Activated CD4-positive, alpha-beta T cell treated with anti-CD3 and anti-CD28 coated beads, Interleukin-2, amount 10 ng/mL, durations not matched to agents 24 days and 14 days (primary cell): ENCODE measurements at regions of chr15 and their contacts with region 1.

Region 1: DNA sequence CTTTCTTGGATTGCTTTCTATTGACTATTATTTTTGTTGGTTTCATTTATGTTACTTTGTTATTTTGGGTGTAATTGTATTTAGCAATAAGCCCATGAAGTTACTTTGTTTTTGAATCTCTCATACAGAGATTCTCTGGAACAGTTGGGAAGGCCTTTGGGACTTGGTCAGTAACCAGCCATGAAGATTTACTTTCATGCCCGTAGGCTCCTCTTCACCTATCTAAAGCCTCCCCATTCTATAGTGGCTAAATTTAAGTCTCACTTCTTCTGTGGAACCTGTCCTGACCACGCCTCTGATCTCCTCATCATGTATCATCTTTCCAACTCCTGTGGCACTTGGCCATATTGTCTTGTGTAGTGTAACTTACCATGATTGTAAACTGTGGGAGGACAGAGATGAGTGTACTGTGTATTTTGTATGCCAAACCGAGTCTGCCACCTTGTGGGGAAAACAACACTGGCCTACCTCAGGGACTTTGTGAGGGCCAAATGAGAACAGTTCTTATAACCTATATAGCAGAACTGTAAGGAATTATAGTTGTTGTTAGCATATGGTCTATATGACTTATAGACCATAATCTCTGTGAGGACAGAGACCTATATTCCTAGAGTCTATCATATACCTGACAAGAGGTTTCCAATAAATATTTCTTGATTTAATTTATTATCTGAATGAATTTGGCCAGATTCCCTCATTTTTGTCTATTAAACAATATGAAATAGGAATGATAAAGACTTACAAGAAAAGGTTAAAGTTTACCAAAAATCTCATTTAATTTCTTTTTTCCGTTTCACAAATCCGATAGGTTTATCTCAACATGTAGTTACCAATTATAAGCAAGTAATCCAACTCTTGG is 75.0 kb downstream of the STARD9 start:
- DNase-seq: peak; percentile 92
- H3K4me3 Mint-ChIP-seq: no peak overlapping the region
- H3K27ac Mint-ChIP-seq: peak overlapping the region; percentile 0
- H3K4me1 Mint-ChIP-seq: peaks cover 10% of the 10 kb centered on the region
- H3K27me3 Mint-ChIP-seq: no peaks in the 10 kb centered on the region

Region 2: DNA sequence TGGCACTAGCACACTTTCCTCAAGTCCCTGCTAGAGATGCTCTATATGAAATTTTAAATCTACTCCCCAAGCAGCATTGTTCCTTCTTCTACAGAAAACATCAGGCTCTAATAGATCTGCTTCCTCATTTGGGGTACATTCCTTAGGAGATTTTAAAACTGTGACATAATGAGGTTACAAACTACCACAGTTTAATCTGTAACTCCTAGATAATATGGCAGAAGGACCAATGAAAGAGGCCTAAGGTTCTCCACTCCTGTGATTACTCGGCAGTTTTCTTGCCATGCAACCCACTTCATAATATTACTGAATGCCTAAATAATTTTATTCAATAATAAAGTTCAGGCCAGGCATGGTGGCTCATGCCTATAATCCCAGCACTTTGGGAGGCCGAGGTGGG is 175.6 kb before region 1 on chr15:
- intact Hi-C with region 1: loop called (anchors 1 kb)
- DNase-seq: no peak
- H3K4me3 Mint-ChIP-seq: no peak overlapping the region
- H3K27ac Mint-ChIP-seq: no peak overlapping the region
- H3K4me1 Mint-ChIP-seq: peaks cover 8% of the 10 kb centered on the region
- H3K27me3 Mint-ChIP-seq: no peaks in the 10 kb centered on the region

Region 3: GRCh38 chr15:42548253-42549031 is 102.0 kb before region 1 on chr15 and contains the starts of genes HAUS2 and LRRC57:
- intact Hi-C with region 1: loop called (anchors 1 kb)
- DNase-seq: peak; percentile 97
- H3K4me3 Mint-ChIP-seq: peak within 1 kb of the TSS; percentile 96
- H3K27ac Mint-ChIP-seq: peak within 1 kb of the TSS; percentile 95
- H3K4me1 Mint-ChIP-seq: peaks cover 46% of the 10 kb centered on the region
- H3K27me3 Mint-ChIP-seq: no peaks in the 10 kb centered on the region
- total RNA-seq, gene HAUS2: 41.1 and 48.0 TPM in 2 replicates
- total RNA-seq, gene LRRC57: 19.0 and 21.1 TPM in 2 replicates

Region 4: GRCh38 chr15:42575188-42576039 is 75.0 kb before region 1 on chr15 and contains the start of gene STARD9:
- intact Hi-C with region 1: loop called (anchors 1 kb)
- DNase-seq: peak; percentile 99
- H3K4me3 Mint-ChIP-seq: peak within 1 kb of the TSS; percentile 93
- H3K27ac Mint-ChIP-seq: peak within 1 kb of the TSS; percentile 82
- H3K4me1 Mint-ChIP-seq: peaks cover 26% of the 10 kb centered on the region
- H3K27me3 Mint-ChIP-seq: peaks cover 25% of the 10 kb centered on the region
- total RNA-seq, gene STARD9: 7.2 and 8.8 TPM in 2 replicates

Region 5: GRCh38 chr15:42679285-42680141 is 29.1 kb after region 1 on chr15:
- intact Hi-C with region 1: loop called (anchors 1 kb)
- DNase-seq: no peak
- H3K4me3 Mint-ChIP-seq: no peak overlapping the region
- H3K27ac Mint-ChIP-seq: peak overlapping the region; percentile 11
- H3K4me1 Mint-ChIP-seq: peaks cover 14% of the 10 kb centered on the region
- H3K27me3 Mint-ChIP-seq: no peaks in the 10 kb centered on the region